K562 (cell line): ENCODE measurements at regions of chr3 and their contacts with region 1.

Region 1: GRCh38 chr3:104673981-104674380 is 692.7 kb upstream of the ALCAM start:
- DNase-seq: no peak
- ATAC-seq: no peak
- H3K4me3 ChIP-seq: no peak overlapping the region
- H3K27ac ChIP-seq: no peak overlapping the region
- H3K4me1 ChIP-seq: no peaks in the 10 kb centered on the region
- H3K27me3 ChIP-seq: no peaks in the 10 kb centered on the region
- CTCF ChIP-seq: no peak
- EP300 ChIP-seq: no peak
- POLR2A ChIP-seq: no peak
- RAD21 ChIP-seq: no peak

Region 2: GRCh38 chr3:104437131-104437750 is 236.7 kb before region 1 on chr3:
- CTCF ChIA-PET with region 1: no interaction called
- POLR2A ChIA-PET with region 1: no interaction called
- in situ Hi-C with region 1: no loop called
- intact Hi-C with region 1: no loop called
- DNase-seq: no peak
- ATAC-seq: no peak
- H3K4me3 ChIP-seq: no peak overlapping the region
- H3K27ac ChIP-seq: no peak overlapping the region
- H3K4me1 ChIP-seq: no peaks in the 10 kb centered on the region
- H3K27me3 ChIP-seq: no peaks in the 10 kb centered on the region
- CTCF ChIP-seq: no peak
- EP300 ChIP-seq: no peak
- POLR2A ChIP-seq: no peak
- RAD21 ChIP-seq: no peak

Region 3: DNA sequence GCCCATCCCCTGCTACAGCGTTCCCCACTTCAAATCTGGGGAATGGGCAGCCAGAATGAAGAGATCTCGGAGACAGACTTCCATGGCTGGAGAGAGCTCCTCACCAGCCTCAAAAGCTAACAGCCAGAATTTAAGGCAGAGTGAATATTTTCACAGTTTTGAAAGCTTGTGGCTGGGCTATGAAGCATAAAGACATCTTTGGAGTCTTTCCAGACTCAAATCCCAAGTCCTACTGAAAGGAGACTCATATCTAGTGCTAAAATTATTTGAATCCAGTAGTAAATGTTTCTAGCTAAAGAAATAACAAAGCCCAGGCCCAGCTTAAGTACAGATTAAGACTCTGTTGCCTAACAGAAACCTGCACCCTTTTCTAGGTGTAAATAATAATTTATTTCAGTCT is 64.3 kb after region 1 on chr3:
- CTCF ChIA-PET with region 1: no interaction called
- POLR2A ChIA-PET with region 1: no interaction called
- in situ Hi-C with region 1: no loop called
- intact Hi-C with region 1: loop called (anchors 10 kb)
- DNase-seq: no peak
- ATAC-seq: no peak
- H3K4me3 ChIP-seq: no peak overlapping the region
- H3K27ac ChIP-seq: no peak overlapping the region
- H3K4me1 ChIP-seq: no peaks in the 10 kb centered on the region
- H3K27me3 ChIP-seq: no peaks in the 10 kb centered on the region
- CTCF ChIP-seq: no peak
- EP300 ChIP-seq: no peak
- POLR2A ChIP-seq: no peak
- RAD21 ChIP-seq: no peak